ENCODE measurements at regions of chr3 and their contacts with region 1.

Region 1: GRCh38 chr3:141959921-141960554 is 83.6 kb downstream of the ATP1B3 start:
- DNase-seq: no peak
- ATAC-seq: peak; percentile 73

Region 2: GRCh38 chr3:142098964-142099363 is 138.9 kb after region 1 on chr3:
- intact Hi-C with region 1: no loop called
- DNase-seq: no peak
- ATAC-seq: no peak

Region 3: DNA sequence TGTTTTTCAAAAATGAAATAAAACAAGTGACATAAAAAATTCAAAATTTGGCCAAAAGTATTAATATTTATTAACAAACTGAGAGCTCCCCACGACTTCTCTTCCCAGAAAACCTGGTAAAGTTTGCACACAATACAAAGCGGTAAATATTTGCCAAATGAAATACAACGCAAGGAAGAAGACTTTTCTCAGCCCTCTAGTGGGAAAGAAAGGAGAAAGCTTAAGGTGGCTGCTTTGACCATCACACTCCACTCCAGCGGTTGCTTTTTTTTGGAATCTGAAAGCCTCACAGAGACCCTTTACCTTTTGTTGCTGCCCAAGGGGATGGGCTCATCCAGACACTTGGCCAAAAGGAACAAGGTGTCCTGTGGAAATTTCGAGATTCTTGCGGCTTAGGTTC is 266.4 kb after region 1 on chr3:
- intact Hi-C with region 1: loop called (anchors 10 kb)
- DNase-seq: no peak
- ATAC-seq: no peak

Measured in Right ventricle myocardium inferior (tissue), 1 donor.